Transverse colon (tissue), 4 donors: ENCODE measurements at regions of chr16 and their contacts with region 1.

Region 1: GRCh38 chr16:15765880-15766279 is 90.9 kb downstream of the MYH11 start:
- DNase-seq: no peak
- H3K4me3 ChIP-seq: no peak overlapping the region
- H3K27ac ChIP-seq: peak overlapping the region in 1 of 4 donors; percentile 52
- H3K4me1 ChIP-seq: no peaks in the 10 kb centered on the region
- H3K27me3 ChIP-seq: no peaks in the 10 kb centered on the region
- CTCF ChIP-seq: peak; percentile 44 to 53 (median 51)
- EP300 ChIP-seq: no peak
- POLR2A ChIP-seq: no peak

Region 2: DNA sequence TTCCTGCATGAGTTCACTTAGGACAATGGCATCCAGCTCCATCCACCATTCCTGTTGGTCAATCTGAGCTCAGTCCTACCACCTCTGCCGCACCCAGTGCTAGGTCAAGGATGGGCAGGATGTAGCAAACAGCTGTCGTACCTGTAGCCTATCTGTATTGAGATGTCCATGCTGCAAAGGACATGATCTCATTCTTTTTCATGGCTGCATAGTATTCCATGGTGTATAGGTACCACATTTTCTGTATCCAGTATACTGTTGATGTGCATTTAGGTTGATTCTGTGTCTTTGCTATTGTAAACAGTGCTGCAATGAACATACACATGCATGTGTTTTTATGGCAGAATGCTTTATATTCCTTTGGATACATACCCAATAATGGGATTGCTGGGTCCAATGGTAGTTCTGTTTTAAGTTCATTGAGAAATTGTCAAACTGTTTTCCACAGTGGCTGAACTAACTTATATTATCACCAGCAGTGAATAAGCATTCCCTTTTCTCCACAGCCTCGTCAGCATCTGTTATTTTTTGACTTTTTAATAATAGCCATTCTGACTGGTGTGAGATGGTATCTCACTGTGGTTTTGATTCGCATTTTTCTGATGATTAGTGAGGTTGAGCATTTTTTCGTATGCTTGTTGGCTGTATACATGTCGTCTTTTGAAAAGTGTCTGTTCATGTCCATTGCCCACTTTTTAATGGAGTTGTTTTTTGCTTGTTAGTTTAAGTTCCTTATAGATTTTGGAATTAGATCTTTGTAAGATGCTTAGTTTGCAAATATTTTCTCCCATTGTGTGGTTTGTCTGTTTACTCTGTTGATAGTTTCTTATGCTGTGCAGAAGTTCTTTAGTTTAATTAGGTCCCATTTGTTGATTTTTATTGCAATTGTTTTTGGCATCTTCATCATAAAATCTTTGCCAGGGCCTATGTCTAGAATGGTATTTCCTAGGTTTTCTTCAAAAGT is 1702.0 kb before region 1 on chr16:
- in situ Hi-C with region 1: no loop called
- intact Hi-C with region 1: no loop called
- DNase-seq: no peak
- H3K4me3 ChIP-seq: no peak overlapping the region
- H3K27ac ChIP-seq: no peak overlapping the region
- H3K4me1 ChIP-seq: no peaks in the 10 kb centered on the region
- H3K27me3 ChIP-seq: no peaks in the 10 kb centered on the region
- CTCF ChIP-seq: no peak
- EP300 ChIP-seq: no peak
- POLR2A ChIP-seq: no peak

Region 3: GRCh38 chr16:15811481-15812400 is 45.9 kb after region 1 on chr16:
- in situ Hi-C with region 1: no loop called
- intact Hi-C with region 1: loop called (anchors 1 kb)
- DNase-seq: no peak
- H3K4me3 ChIP-seq: no peak overlapping the region
- H3K27ac ChIP-seq: peak overlapping the region; percentile 71 to 84 (median 74)
- H3K4me1 ChIP-seq: peaks cover 11 to 42% (median 21%) of the 10 kb centered on the region in 4 donors
- H3K27me3 ChIP-seq: no peaks in the 10 kb centered on the region
- CTCF ChIP-seq: no peak
- EP300 ChIP-seq: no peak
- POLR2A ChIP-seq: no peak